Heart right ventricle (tissue), 16 donors: ENCODE measurements at regions of chr10 and their contacts with region 1.

Region 1: GRCh38 chr10:72331601-72332422 is 22.9 kb downstream of the DNAJB12 start:
- DNase-seq: peak; percentile 82 to 83
- ATAC-seq: peak; percentile 48 to 78 (median 61)
- H3K4me3 ChIP-seq: peak overlapping the region in 3 of 10 donors; percentile 5 to 10 (median 9)
- H3K27ac ChIP-seq: peak overlapping the region; percentile 53 to 97 (median 88)
- H3K4me1 ChIP-seq: peaks cover 52 to 99% (median 86%) of the 10 kb centered on the region in 9 donors
- H3K27me3 ChIP-seq: no peaks in the 10 kb centered on the region
- CTCF ChIP-seq: peak in 5 of 9 donors; percentile 15 to 45 (median 29)

Region 2: DNA sequence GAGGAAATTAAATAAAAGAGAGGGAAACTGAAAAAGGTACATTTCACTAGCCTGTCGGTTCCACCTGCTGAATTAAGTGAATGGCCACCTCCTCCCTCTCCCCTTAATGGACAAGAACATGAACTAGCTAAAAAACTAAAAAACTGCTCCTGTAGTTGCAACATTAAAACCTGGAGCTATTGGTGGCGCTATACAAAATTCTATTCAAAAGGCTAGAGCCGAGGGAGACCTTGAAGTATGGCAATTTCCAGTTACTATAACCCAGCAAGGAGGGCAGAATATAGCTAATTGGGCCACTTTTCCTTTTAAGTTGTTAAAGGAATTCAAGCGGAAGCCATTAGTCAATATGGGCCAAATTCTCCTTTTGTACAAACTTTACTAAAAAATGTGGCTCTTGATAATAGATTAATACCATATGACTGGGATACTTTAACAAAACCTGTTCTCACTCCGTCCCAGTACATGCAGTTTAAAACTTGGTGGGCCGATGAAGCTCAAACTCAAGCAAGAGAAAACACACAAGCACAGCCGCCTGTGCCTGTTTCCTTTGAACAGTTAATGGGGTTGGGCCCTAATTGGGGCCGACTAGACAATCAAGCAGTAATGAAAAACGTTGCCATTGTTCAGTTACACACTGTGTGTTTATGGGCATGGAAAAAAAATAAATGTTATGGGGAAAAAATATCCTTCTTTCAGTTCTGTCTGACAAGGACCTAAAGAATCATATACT is 374.1 kb before region 1 on chr10:
- intact Hi-C with region 1: loop called in 6 of 10 experiments (anchors 5 to 10 kb)
- DNase-seq: no peak
- ATAC-seq: no peak
- H3K4me3 ChIP-seq: no peak overlapping the region
- H3K27ac ChIP-seq: no peak overlapping the region
- H3K4me1 ChIP-seq: peaks cover 2 to 12% (median 8%) of the 10 kb centered on the region in 9 donors
- H3K27me3 ChIP-seq: no peaks in the 10 kb centered on the region
- CTCF ChIP-seq: peak in 1 of 9 donors; percentile 8

Region 3: GRCh38 chr10:72048450-72049124 is 283.2 kb before region 1 on chr10:
- intact Hi-C with region 1: loop called in 8 of 10 experiments (anchors 5 to 10 kb)
- DNase-seq: peak; percentile 94
- ATAC-seq: peak; percentile 58 to 91 (median 84)
- H3K4me3 ChIP-seq: no peak overlapping the region
- H3K27ac ChIP-seq: no peak overlapping the region
- H3K4me1 ChIP-seq: peaks cover 0 to 25% (median 10%) of the 10 kb centered on the region in 9 donors
- H3K27me3 ChIP-seq: no peaks in the 10 kb centered on the region
- CTCF ChIP-seq: peak; percentile 99 to 100 (median 100)

Region 4: DNA sequence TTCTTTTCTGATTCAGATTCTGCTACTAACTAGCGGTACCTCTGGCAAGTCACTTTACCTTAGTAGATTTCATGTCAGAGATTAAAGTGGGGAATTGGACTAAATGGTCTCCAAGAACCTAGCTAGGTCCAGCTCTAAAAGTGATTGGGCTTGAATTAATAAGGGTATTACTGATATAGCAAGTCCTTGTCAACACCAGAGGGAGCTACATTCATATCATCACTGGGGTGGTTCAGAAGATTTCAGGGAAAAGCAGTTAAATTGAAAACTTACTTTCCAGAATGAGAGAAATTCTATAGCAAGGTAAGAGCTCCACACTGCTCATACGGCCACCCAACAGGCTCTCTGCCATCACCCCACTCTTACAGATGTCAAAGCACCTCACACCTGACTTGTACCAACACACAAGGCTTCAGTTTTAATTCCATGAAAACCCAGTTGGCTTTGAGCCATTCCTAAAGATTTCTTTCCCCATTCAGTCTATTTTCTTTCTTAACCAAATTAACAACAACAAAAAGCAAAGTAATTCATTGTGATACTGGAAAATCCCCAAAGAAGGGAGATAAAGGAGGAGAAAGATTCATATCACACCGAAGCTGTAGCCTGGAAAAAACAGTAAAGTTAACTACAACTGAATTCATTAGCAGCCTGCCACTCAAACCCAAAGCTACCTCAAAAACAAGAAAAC is 205.5 kb before region 1 on chr10:
- intact Hi-C with region 1: loop called in 8 of 10 experiments (anchors 5 kb)
- DNase-seq: no peak
- ATAC-seq: peak in 3 of 8 donors; percentile 22 to 41 (median 32)
- H3K4me3 ChIP-seq: no peak overlapping the region
- H3K27ac ChIP-seq: peak overlapping the region in 1 of 10 donors; percentile 1
- H3K4me1 ChIP-seq: peaks cover 0 to 25% (median 6%) of the 10 kb centered on the region in 9 donors
- H3K27me3 ChIP-seq: no peaks in the 10 kb centered on the region
- CTCF ChIP-seq: peak; percentile 7 to 57 (median 38)

Region 5: GRCh38 chr10:72215652-72216549 is 115.9 kb before region 1 on chr10 and contains the starts of genes ANAPC16 and ASCC1:
- intact Hi-C with region 1: loop called in 6 of 10 experiments (anchors 2 to 10 kb)
- DNase-seq: peak; percentile 91 to 93
- ATAC-seq: peak; percentile 97 to 98 (median 98)
- H3K4me3 ChIP-seq: peak within 1 kb of the TSS; percentile 23 to 84 (median 70)
- H3K27ac ChIP-seq: peak within 1 kb of the TSS; percentile 89 to 99 (median 98)
- H3K4me1 ChIP-seq: peaks cover 10 to 49% (median 39%) of the 10 kb centered on the region in 9 donors
- H3K27me3 ChIP-seq: no peaks in the 10 kb centered on the region
- CTCF ChIP-seq: peak in 2 of 9 donors; percentile 6 to 8
- total RNA-seq, gene ANAPC16: 181 to 246 (median 221) TPM
- total RNA-seq, gene ASCC1: 25.2 to 40.5 (median 33.0) TPM

Region 6: GRCh38 chr10:72248468-72249151 is 83.2 kb before region 1 on chr10:
- intact Hi-C with region 1: loop called in 2 of 10 experiments (anchors 10 kb)
- DNase-seq: peak; percentile 81 to 87
- ATAC-seq: peak; percentile 83 to 91 (median 89)
- H3K4me3 ChIP-seq: peak overlapping the region in 6 of 10 donors; percentile 4 to 31 (median 22)
- H3K27ac ChIP-seq: peak overlapping the region; percentile 78 to 94 (median 88)
- H3K4me1 ChIP-seq: peaks cover 47 to 100% (median 90%) of the 10 kb centered on the region in 9 donors
- H3K27me3 ChIP-seq: no peaks in the 10 kb centered on the region
- CTCF ChIP-seq: no peak

Region 7: DNA sequence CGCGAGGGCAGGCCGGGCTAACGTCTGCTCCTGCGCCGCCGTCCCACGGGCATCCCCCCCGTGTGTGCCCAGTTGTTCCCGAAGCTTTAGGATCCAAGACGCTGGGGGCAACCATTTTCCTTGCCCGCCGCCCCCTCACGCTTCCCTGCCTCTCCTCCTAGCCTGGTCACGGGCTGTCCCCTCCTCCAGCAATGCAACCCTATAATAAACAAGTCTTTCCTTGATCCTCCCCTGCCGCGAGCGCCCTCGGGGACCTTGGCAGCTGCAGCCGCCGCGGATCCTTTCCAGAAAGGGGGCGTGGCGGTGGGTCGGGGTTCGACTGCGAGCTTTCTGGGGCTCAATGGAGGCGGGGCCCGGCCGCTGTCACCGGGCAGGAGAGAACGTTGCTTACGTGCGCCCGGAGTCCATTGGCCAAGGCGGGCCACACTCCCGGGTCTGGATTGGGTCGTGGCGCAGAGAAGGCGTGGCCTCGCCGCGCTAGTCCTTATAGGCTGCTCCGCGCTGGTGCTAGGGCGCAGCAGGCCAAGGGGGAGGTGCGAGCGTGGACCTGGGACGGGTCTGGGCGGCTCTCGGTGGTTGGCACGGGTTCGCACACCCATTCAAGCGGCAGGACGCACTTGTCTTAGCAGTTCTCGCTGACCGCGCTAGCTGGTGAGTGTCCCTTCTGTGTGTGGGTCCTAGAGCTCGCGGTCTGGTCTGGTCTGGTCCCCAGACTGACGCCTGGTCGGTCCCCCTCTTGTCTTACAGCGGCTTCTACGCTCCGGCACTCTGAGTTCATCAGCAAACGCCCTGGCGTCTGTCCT is 58.2 kb before region 1 on chr10 and contains the start of gene DDIT4:
- intact Hi-C with region 1: loop called in 5 of 10 experiments (anchors 2 to 5 kb)
- DNase-seq: peak; percentile 99 to 100
- ATAC-seq: peak; percentile 90 to 95 (median 94)
- H3K4me3 ChIP-seq: peak within 1 kb of the TSS; percentile 55 to 96 (median 82)
- H3K27ac ChIP-seq: peak within 1 kb of the TSS; percentile 93 to 100 (median 98)
- H3K4me1 ChIP-seq: peaks cover 0 to 52% (median 45%) of the 10 kb centered on the region in 9 donors
- H3K27me3 ChIP-seq: no peaks in the 10 kb centered on the region
- CTCF ChIP-seq: no peak
- total RNA-seq, gene DDIT4: 13.6 to 102 (median 30.2) TPM